Caco-2 (cell line): ENCODE measurements at regions of chr19 and their contacts with region 1.

Region 1: DNA sequence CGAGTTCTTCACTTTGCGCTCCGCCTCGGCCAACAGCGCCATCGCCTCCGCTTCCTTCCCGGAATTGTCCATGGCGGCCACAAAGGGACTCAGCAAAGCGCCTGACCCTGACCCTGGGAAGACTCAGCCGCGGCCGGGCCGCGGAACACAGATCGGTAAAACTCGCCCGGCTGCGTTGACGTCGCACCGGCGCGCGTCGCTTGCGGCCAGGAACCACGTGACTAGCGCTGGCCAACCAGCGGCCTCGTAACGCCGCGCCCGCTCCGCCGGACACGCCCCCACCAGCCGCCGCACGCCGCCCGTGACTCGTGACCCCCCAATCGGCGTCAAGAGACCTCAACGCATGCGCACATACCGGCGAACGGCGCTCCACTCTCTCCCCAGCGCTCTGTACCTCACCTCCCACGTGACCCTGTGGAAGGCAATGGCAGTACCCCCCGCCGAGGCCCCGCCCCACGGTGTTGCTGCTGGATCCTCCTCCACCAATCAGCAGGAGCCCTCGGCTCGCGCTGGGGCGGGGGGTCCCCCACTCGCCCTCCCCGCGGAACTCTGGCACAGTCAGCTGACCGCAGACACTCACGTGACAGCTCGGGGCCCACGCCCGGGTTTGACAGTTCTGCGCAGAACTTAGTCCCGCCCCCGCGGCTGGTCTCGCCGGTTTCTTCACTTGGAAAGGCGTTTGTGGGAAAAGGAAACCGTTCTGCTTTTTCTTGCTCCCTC is at the start of gene NAPA:
- DNase-seq: peak; percentile 100
- H3K4me3 ChIP-seq: peak within 1 kb of the TSS; percentile 83
- H3K4me3 Mint-ChIP-seq: peak within 1 kb of the TSS; percentile 100
- H3K27ac Mint-ChIP-seq: peak within 1 kb of the TSS; percentile 87
- H3K4me1 ChIP-seq: peaks cover 25% of the 10 kb centered on the region
- H3K4me1 Mint-ChIP-seq: peaks cover 34% of the 10 kb centered on the region
- H3K27me3 ChIP-seq: no peaks in the 10 kb centered on the region
- H3K27me3 Mint-ChIP-seq: no peaks in the 10 kb centered on the region
- CTCF ChIP-seq: no peak
- total RNA-seq, gene NAPA: 149 TPM in 2 replicates

Region 2: GRCh38 chr19:47436712-47437401 is 78.2 kb before region 1 on chr19:
- CTCF ChIA-PET with region 1: interaction called, 22 read pairs
- POLR2A ChIA-PET with region 1: no interaction called
- intact Hi-C with region 1: loop called (anchors 1 kb)
- DNase-seq: peak; percentile 79 to 88
- H3K4me3 ChIP-seq: no peak overlapping the region
- H3K4me3 Mint-ChIP-seq: no peak overlapping the region
- H3K27ac Mint-ChIP-seq: no peak overlapping the region
- H3K4me1 ChIP-seq: no peaks in the 10 kb centered on the region
- H3K4me1 Mint-ChIP-seq: no peaks in the 10 kb centered on the region
- H3K27me3 ChIP-seq: no peaks in the 10 kb centered on the region; the same call in 1 of the 2 replicates
- H3K27me3 Mint-ChIP-seq: peaks cover 6% of the 10 kb centered on the region
- CTCF ChIP-seq: peak; percentile 93 to 96

Region 3: DNA sequence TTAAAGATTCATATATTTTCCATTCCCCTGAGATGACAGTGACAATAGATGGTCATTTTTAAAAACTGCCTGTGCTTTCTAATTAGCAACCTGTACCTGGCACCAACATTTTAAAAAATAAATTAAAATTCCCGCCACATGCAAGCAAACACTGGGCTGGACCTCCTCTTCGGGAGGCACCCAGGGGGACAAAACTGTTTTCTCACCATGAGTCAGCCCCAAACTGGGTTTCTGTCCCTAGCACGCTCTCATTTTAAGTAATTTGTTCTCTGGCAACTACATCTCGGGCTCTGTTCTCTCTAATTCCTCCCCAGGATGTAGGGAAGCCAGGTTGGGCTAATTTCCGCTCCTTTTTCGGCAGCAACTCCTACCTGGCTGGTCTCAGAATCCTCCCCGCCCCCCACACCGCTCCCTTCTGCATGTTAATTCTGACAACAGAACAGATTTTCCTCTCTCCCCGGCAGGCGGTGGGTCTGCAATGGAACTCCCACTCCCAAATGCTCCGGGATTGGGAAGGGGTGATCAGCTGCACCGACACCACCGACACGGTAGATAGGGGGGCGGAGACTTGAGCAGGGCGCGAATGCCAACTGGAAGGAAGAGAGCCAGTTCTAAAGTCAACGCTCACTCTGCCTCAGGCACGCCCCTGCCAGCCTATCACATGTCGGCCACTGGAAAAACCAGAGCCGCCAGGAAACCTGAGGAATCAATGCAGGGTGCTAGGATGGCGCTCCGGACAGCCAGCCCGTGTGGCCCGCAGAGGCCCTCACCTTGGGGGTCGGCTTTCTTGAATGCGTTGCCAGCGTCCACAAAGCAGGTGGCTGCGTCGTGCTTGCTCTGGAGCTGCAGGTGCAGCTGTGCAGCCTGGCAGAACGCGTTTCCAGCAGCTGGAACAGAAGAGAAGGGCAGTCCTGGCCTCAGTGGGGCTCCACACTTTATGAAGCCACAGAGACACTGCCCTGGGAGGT is 14.9 kb before region 1 on chr19:
- CTCF ChIA-PET with region 1: no interaction called
- POLR2A ChIA-PET with region 1: no interaction called
- intact Hi-C with region 1: no loop called
- DNase-seq: no peak
- H3K4me3 ChIP-seq: no peak overlapping the region
- H3K4me3 Mint-ChIP-seq: no peak overlapping the region
- H3K27ac Mint-ChIP-seq: no peak overlapping the region
- H3K4me1 ChIP-seq: no peaks in the 10 kb centered on the region
- H3K4me1 Mint-ChIP-seq: no peaks in the 10 kb centered on the region
- H3K27me3 ChIP-seq: no peaks in the 10 kb centered on the region
- H3K27me3 Mint-ChIP-seq: no peaks in the 10 kb centered on the region
- CTCF ChIP-seq: no peak

Region 4: GRCh38 chr19:47564081-47564480 is 49.1 kb after region 1 on chr19:
- CTCF ChIA-PET with region 1: no interaction called
- POLR2A ChIA-PET with region 1: no interaction called
- intact Hi-C with region 1: loop called (anchors 1 kb)
- DNase-seq: peak; percentile 62 to 71
- H3K4me3 ChIP-seq: no peak overlapping the region
- H3K4me3 Mint-ChIP-seq: peak overlapping the region; percentile 37
- H3K27ac Mint-ChIP-seq: peak overlapping the region; percentile 69
- H3K4me1 ChIP-seq: peaks cover 22% of the 10 kb centered on the region
- H3K4me1 Mint-ChIP-seq: peaks cover 28% of the 10 kb centered on the region
- H3K27me3 ChIP-seq: no peaks in the 10 kb centered on the region
- H3K27me3 Mint-ChIP-seq: no peaks in the 10 kb centered on the region
- CTCF ChIP-seq: no peak

Region 5: GRCh38 chr19:47581630-47582319 is 66.7 kb after region 1 on chr19:
- CTCF ChIA-PET with region 1: no interaction called
- POLR2A ChIA-PET with region 1: no interaction called
- intact Hi-C with region 1: no loop called
- DNase-seq: peak in 1 of 2 experiments; percentile 24
- H3K4me3 ChIP-seq: no peak overlapping the region
- H3K4me3 Mint-ChIP-seq: peak overlapping the region; percentile 0
- H3K27ac Mint-ChIP-seq: no peak overlapping the region
- H3K4me1 ChIP-seq: peaks cover 8% of the 10 kb centered on the region; the same call in 1 of the 2 replicates
- H3K4me1 Mint-ChIP-seq: peaks cover 17% of the 10 kb centered on the region
- H3K27me3 ChIP-seq: no peaks in the 10 kb centered on the region
- H3K27me3 Mint-ChIP-seq: no peaks in the 10 kb centered on the region
- CTCF ChIP-seq: no peak

Region 6: GRCh38 chr19:47608074-47608918 is 93.3 kb after region 1 on chr19:
- CTCF ChIA-PET with region 1: interaction called, 3 read pairs
- POLR2A ChIA-PET with region 1: no interaction called
- intact Hi-C with region 1: loop called (anchors 2 kb)
- DNase-seq: peak; percentile 94 to 99
- H3K4me3 ChIP-seq: peak overlapping the region; percentile 99
- H3K4me3 Mint-ChIP-seq: peak overlapping the region; percentile 91
- H3K27ac Mint-ChIP-seq: peak overlapping the region; percentile 91
- H3K4me1 ChIP-seq: peaks cover 27% of the 10 kb centered on the region
- H3K4me1 Mint-ChIP-seq: peaks cover 11% of the 10 kb centered on the region
- H3K27me3 ChIP-seq: no peaks in the 10 kb centered on the region
- H3K27me3 Mint-ChIP-seq: no peaks in the 10 kb centered on the region
- CTCF ChIP-seq: peak in 1 of 2 experiments; percentile 29

Region 7: GRCh38 chr19:47657719-47658118 is 142.7 kb after region 1 on chr19:
- CTCF ChIA-PET with region 1: no interaction called
- POLR2A ChIA-PET with region 1: no interaction called
- intact Hi-C with region 1: loop called (anchors 1 kb)
- DNase-seq: peak; percentile 80 to 87
- H3K4me3 ChIP-seq: no peak overlapping the region
- H3K4me3 Mint-ChIP-seq: peak overlapping the region; percentile 57
- H3K27ac Mint-ChIP-seq: peak overlapping the region; percentile 94
- H3K4me1 ChIP-seq: peaks cover 64% of the 10 kb centered on the region
- H3K4me1 Mint-ChIP-seq: peaks cover 56% of the 10 kb centered on the region
- H3K27me3 ChIP-seq: no peaks in the 10 kb centered on the region
- H3K27me3 Mint-ChIP-seq: no peaks in the 10 kb centered on the region
- CTCF ChIP-seq: no peak

Region 8: GRCh38 chr19:47707135-47707925 is 192.3 kb after region 1 on chr19:
- CTCF ChIA-PET with region 1: interaction called, 10 read pairs
- POLR2A ChIA-PET with region 1: no interaction called
- intact Hi-C with region 1: loop called (anchors 1 kb)
- DNase-seq: peak; percentile 84 to 87
- H3K4me3 ChIP-seq: no peak overlapping the region
- H3K4me3 Mint-ChIP-seq: no peak overlapping the region
- H3K27ac Mint-ChIP-seq: peak overlapping the region; percentile 11
- H3K4me1 ChIP-seq: 0 out of 2 replicates have a peak, but pooled peaks cover 4% of the 10 kb centered on the region
- H3K4me1 Mint-ChIP-seq: peaks cover 10% of the 10 kb centered on the region
- H3K27me3 ChIP-seq: no peaks in the 10 kb centered on the region
- H3K27me3 Mint-ChIP-seq: no peaks in the 10 kb centered on the region
- CTCF ChIP-seq: peak; percentile 85 to 91